B cell (primary cell): ENCODE measurements at regions of chr13 and their contacts with region 1.

Region 1: DNA sequence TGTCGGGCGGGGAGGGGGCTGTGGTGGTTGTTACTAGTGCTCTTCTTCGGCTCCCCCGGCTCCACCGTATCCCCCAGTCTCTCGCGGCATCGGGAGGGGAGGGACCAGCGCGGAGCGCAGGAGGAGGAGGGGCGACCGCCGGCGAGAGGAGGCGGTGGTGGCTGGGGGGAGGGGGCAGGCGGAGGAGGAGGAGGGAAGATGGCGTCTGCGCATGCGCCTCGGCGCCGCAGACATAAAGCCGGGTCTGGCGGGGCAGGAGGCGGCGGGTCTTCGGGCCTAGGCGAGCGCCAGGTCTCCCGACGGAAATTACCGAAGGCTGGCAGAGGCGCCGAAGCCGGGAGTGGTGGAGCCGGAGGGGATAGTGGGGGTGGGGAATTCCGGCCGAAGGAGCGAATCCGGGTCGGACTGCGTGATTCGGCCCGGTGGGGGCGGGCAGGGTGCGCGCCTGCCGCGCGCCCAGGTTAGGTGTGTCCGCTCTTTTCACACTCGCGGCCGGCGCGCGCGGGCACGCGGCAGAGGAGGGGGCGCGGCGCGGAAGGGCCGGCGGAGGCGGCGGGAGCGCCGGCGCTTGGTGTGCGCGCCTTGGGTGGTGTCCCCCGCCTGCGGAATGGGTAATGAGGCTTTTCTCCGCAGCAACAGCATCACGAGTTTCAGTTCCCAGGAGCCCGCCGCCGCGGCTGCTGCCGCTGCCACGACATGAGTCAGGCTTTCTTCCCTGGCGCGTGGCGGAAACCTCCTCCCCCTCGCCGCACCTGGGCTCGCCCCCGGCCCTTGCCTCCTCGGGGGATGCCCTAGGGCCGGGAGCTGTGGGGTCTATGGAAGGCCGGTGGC is 1.3 kb upstream of the TSC22D1 start:
- DNase-seq: peak; percentile 97
- ATAC-seq: peak; percentile 74
- H3K4me3 ChIP-seq: peak overlapping the region; percentile 50 to 94 (median 77)
- H3K4me3 Mint-ChIP-seq: peak overlapping the region; percentile 95
- H3K27ac ChIP-seq: peak overlapping the region; percentile 97 to 98
- H3K27ac Mint-ChIP-seq: peak overlapping the region; percentile 97
- H3K4me1 ChIP-seq: peaks cover 13 to 18% of the 10 kb centered on the region in 2 donors
- H3K4me1 Mint-ChIP-seq: peaks cover 30% of the 10 kb centered on the region
- H3K27me3 ChIP-seq: no peaks in the 10 kb centered on the region
- H3K27me3 Mint-ChIP-seq: peaks cover 1% of the 10 kb centered on the region
- CTCF ChIP-seq: no peak

Region 2: GRCh38 chr13:43878892-43879754 is 698.3 kb before region 1 on chr13 and contains the start of gene CCDC122:
- CTCF ChIA-PET with region 1: no interaction called
- POLR2A ChIA-PET with region 1: no interaction called
- intact Hi-C with region 1: loop called (anchors 1 kb)
- DNase-seq: peak; percentile 89
- ATAC-seq: peak; percentile 79
- H3K4me3 ChIP-seq: peak within 1 kb of the TSS; percentile 36 to 78 (median 75)
- H3K4me3 Mint-ChIP-seq: peak within 1 kb of the TSS; percentile 88
- H3K27ac ChIP-seq: peak within 1 kb of the TSS; percentile 76 to 92
- H3K27ac Mint-ChIP-seq: peak within 1 kb of the TSS; percentile 94
- H3K4me1 ChIP-seq: peaks cover 20 to 22% of the 10 kb centered on the region in 2 donors
- H3K4me1 Mint-ChIP-seq: peaks cover 31% of the 10 kb centered on the region
- H3K27me3 ChIP-seq: no peaks in the 10 kb centered on the region
- H3K27me3 Mint-ChIP-seq: no peaks in the 10 kb centered on the region
- CTCF ChIP-seq: no peak
- total RNA-seq, gene CCDC122: 10.7 and 12.1 TPM in 2 replicates

Region 3: DNA sequence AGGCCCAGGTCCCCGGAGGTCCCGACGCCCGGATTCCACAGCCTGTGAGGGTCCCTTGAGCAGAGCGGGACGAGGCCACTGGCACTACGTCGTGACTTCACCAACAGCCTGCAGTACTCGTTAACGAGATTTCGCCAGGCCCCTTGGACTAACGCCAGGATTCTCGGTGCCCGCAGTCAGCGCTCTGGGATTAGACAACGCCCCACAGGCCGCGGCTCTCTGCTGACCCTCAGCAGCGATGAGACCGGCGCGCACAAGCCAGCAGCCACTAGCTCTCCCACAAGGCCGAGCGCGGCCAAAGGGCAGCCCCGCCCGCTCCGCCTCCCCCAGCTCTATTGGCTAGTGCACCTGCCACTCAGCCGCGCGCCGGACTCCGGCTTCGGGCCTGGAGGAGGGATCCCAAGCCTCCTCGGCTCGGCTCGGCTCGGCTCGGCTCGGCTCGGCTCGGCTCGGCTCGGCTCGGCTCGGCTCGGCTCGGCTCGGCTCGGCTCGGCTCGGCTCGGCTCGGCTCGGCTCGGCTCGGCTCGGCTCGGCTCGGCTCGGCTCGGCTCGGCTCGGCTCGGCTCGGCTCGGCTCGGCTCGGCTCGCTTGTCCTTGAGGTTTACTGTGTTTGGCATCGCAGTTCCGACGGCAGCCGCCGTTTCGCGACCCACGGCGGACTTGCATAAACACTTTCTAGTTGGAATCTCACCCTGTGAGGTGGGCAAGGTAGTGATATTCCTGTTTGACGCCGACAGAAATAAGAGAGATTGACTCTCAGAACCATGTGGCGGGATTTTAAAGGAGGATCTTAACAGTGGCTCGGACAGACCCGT is 435.5 kb before region 1 on chr13:
- CTCF ChIA-PET with region 1: no interaction called
- POLR2A ChIA-PET with region 1: no interaction called
- intact Hi-C with region 1: loop called (anchors 5 kb)
- DNase-seq: peak; percentile 97
- ATAC-seq: peak; percentile 99
- H3K4me3 ChIP-seq: peak overlapping the region; percentile 69 to 91 (median 81)
- H3K4me3 Mint-ChIP-seq: peak overlapping the region; percentile 96
- H3K27ac ChIP-seq: peak overlapping the region; percentile 77 to 93
- H3K27ac Mint-ChIP-seq: peak overlapping the region; percentile 94
- H3K4me1 ChIP-seq: peaks cover 22 to 26% of the 10 kb centered on the region in 2 donors
- H3K4me1 Mint-ChIP-seq: peaks cover 28% of the 10 kb centered on the region
- H3K27me3 ChIP-seq: no peaks in the 10 kb centered on the region
- H3K27me3 Mint-ChIP-seq: peaks cover 7% of the 10 kb centered on the region
- CTCF ChIP-seq: no peak

Region 4: DNA sequence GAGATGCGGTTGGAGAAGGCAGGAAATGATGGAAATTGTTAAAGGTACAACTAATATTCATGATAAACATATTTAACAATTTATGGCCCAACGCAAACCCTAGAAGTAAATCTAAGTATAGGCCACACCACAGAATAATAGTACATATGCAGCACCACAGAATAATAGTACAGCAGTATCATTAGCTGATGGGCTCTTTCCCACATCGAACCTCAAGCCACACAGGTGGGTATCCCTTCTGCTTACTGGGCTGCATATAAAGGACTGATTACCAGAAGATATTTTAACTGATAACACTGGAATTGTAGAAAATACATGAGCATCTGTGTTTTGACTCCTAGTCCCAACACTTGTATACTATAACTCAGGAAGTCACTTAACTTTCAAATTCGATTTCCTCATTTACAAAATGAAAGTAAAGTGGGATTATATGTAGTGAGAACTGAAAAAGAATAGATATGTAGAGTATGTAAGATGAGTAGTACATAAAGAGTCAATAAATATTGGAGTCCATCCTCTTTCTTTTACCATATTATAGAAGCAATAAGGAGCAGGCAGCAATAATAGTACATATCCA is 92.8 kb before region 1 on chr13:
- CTCF ChIA-PET with region 1: interaction called, 10 read pairs
- POLR2A ChIA-PET with region 1: no interaction called
- intact Hi-C with region 1: loop called (anchors 2 kb)
- DNase-seq: peak; percentile 48
- ATAC-seq: no peak
- H3K4me3 ChIP-seq: peak overlapping the region in 3 of 5 experiments; percentile 18 to 44 (median 26)
- H3K4me3 Mint-ChIP-seq: peak overlapping the region; percentile 76
- H3K27ac ChIP-seq: peak overlapping the region in 1 of 2 donors; percentile 56
- H3K27ac Mint-ChIP-seq: peak overlapping the region; percentile 63
- H3K4me1 ChIP-seq: peaks cover 10 to 11% of the 10 kb centered on the region in 2 donors
- H3K4me1 Mint-ChIP-seq: peaks cover 30% of the 10 kb centered on the region
- H3K27me3 ChIP-seq: no peaks in the 10 kb centered on the region
- H3K27me3 Mint-ChIP-seq: no peaks in the 10 kb centered on the region
- CTCF ChIP-seq: no peak

Region 5: GRCh38 chr13:44988973-44989817 is 411.7 kb after region 1 on chr13 and contains the starts of genes GPALPP1 and NUFIP1:
- CTCF ChIA-PET with region 1: no interaction called
- POLR2A ChIA-PET with region 1: no interaction called
- intact Hi-C with region 1: loop called (anchors 1 kb)
- DNase-seq: peak; percentile 93
- ATAC-seq: peak; percentile 97
- H3K4me3 ChIP-seq: peak within 1 kb of the TSS; percentile 92 to 99 (median 98)
- H3K4me3 Mint-ChIP-seq: peak within 1 kb of the TSS; percentile 100
- H3K27ac ChIP-seq: peak within 1 kb of the TSS; percentile 79 to 89
- H3K27ac Mint-ChIP-seq: peak within 1 kb of the TSS; percentile 98
- H3K4me1 ChIP-seq: peaks cover 13 to 24% of the 10 kb centered on the region in 2 donors
- H3K4me1 Mint-ChIP-seq: peaks cover 43% of the 10 kb centered on the region
- H3K27me3 ChIP-seq: no peaks in the 10 kb centered on the region
- H3K27me3 Mint-ChIP-seq: no peaks in the 10 kb centered on the region
- CTCF ChIP-seq: no peak
- total RNA-seq, gene GPALPP1: 41.8 and 45.6 TPM in 2 replicates
- total RNA-seq, gene NUFIP1: 4.7 and 5.8 TPM in 2 replicates

Region 6: DNA sequence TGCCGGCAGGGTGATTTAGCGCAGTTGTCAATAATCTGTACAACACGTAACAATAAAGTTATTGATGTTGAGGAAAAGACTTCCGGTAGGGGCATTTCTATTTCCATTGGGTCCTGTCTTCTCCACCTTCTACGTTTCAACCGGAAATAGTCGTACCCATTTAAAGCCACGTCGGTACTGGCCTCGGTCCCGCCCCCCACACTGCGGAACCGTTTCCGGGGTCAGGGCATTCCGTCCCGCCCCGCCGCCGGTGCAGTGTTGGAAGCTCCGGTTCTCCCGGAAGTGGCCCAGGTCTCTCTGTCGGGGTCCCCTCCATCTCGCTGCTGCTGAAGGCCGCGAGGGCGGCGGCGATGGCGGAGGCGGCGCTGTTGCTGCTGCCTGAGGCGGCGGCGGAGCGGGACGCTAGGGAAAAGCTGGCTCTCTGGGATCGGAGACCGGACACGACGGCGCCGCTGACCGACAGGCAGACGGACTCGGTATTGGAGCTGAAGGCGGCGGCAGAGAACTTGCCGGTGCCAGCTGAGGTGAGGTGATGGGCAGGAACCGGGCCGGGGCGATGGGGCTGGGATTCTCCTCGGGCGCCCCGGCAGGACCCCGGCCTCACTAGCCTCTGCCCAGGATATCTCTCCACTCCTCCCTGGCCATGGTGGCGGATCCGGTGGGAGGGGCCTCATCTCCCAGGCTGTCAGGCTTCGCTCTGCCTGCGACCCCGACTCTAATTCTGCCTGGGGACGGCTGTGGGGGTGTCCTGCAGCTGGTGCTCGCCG is 887.4 kb after region 1 on chr13 and contains the start of gene COG3:
- CTCF ChIA-PET with region 1: no interaction called
- POLR2A ChIA-PET with region 1: no interaction called
- intact Hi-C with region 1: loop called (anchors 5 kb)
- DNase-seq: peak; percentile 96
- ATAC-seq: peak; percentile 96
- H3K4me3 ChIP-seq: peak within 1 kb of the TSS; percentile 74 to 96 (median 88)
- H3K4me3 Mint-ChIP-seq: peak within 1 kb of the TSS; percentile 91
- H3K27ac ChIP-seq: peak within 1 kb of the TSS; percentile 78 to 83
- H3K27ac Mint-ChIP-seq: peak within 1 kb of the TSS; percentile 91
- H3K4me1 ChIP-seq: peaks cover 12 to 21% of the 10 kb centered on the region in 2 donors
- H3K4me1 Mint-ChIP-seq: peaks cover 38% of the 10 kb centered on the region
- H3K27me3 ChIP-seq: no peaks in the 10 kb centered on the region
- H3K27me3 Mint-ChIP-seq: no peaks in the 10 kb centered on the region
- CTCF ChIP-seq: peak; percentile 56
- total RNA-seq, gene COG3: 37.3 and 41.5 TPM in 2 replicates